KBM-7 (cell line): ENCODE measurements at regions of chr4 and their contacts with region 1.

Region 1: DNA sequence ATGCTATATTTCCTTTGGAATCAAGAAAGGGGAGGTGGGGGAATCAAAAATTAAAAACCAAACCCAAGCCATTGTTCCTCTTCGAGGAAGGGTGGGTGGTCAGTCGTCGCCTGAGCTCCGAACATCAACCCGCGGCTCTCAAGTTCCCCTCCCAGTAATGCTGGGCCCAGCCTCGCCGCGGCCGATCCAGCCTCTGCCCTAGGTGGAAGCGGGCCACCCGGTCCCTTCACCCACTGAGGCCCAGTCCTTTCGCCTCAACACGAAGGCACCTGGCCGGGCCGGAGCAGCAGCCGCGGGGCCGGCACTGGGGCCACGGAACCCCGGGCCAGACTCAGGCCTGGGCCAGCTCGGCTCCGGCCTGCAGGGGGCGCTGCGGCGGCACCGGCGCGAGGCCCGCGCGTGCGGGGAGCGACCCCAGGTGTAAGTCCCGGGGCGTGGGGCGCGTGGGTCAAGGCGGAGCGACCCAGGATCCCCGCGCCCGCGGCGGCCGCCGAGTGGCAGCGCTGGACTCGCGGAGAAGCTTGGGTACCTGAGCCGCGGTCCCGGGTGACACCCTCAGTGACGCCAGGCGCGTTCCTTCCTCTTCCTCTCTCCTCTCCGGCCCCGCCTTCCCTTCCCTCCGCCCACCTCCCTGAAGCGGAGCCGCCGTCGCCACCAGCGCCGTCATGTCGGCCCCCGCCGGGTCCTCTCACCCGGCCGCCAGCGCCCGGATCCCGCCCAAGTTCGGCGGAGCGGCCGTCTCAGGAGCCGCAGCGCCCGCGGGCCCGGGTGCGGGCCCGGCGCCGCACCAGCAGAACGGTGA is at the start of gene SEC24B:
- DNase-seq: peak; percentile 88

Region 2: GRCh38 chr4:109046471-109047201 is 386.8 kb before region 1 on chr4:
- in situ Hi-C with region 1: no loop called
- DNase-seq: peak; percentile 79

Region 3: GRCh38 chr4:109690690-109691410 is 257.4 kb after region 1 on chr4:
- in situ Hi-C with region 1: loop called (anchors 25 kb)
- DNase-seq: no peak

Region 4: DNA sequence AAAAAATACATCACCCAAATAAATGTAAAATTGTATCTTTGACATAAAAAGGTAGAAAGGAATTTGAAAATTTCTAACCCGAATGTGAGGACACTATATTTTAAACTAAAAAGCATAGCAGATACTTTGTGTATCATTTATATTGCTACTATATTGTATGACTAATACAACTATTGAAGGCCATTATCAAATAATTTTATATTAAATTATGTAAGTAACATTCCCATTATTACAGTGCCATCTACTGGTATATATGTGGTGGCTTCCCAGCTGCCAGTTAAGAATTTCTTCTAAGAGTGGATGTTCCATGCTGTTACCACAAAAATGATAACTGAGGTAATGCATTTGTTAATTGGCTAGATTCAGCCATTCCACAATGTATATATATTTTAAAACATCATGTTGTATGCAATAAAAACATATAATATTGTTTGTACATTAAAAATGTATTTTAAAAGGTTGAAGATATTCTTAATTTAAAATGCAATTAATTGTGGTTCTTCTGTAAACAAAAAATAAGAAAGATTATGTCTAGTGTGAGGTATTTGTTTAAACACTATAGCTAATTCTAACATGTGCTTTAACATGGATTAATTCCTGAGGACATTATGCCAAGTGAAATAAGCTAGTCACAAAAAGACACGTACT is 544.6 kb after region 1 on chr4:
- in situ Hi-C with region 1: loop called (anchors 10 kb)
- DNase-seq: no peak